GM18951 (cell line): ENCODE measurements at regions of chr7 and their contacts with region 1.

Region 1: GRCh38 chr7:22103255-22103969 is 157.7 kb upstream of the CDCA7L start:
- POLR2A ChIP-seq: no peak

Region 2: DNA sequence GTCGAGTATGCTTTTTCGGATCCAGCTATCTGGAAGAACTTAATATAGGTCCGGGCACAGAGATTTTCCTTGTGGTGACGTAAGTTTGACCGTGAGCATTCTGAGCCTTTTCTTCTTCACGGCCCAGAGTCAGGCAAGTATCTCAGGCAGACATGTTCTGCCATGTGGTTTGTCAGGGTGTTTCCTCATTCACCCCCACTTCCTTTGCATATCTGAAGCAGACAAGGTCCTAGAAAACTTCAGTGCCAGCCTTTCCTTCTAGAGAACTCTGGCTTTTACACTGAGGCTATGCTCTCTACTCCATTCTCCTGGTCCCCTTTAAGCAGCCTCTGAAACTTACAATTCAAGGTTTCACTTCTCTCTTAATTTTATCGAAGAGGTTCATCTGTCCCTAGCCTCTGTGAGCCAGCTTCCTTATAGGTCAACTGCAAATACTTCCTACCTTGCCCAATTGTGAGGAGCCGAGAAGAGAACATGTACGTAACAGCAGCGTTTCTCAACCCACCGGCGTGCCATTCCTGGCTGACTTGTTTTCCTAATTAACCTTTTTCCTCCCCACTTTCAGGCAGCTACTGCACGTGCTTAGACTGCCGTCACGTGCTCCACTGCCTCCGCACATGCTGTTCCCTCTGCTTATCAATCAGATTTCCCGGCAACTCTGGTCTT is 205.0 kb before region 1 on chr7:
- in situ Hi-C with region 1: no loop called
- POLR2A ChIP-seq: no peak

Region 3: GRCh38 chr7:21966271-21966670 is 137.1 kb before region 1 on chr7:
- in situ Hi-C with region 1: no loop called
- POLR2A ChIP-seq: no peak

Region 4: DNA sequence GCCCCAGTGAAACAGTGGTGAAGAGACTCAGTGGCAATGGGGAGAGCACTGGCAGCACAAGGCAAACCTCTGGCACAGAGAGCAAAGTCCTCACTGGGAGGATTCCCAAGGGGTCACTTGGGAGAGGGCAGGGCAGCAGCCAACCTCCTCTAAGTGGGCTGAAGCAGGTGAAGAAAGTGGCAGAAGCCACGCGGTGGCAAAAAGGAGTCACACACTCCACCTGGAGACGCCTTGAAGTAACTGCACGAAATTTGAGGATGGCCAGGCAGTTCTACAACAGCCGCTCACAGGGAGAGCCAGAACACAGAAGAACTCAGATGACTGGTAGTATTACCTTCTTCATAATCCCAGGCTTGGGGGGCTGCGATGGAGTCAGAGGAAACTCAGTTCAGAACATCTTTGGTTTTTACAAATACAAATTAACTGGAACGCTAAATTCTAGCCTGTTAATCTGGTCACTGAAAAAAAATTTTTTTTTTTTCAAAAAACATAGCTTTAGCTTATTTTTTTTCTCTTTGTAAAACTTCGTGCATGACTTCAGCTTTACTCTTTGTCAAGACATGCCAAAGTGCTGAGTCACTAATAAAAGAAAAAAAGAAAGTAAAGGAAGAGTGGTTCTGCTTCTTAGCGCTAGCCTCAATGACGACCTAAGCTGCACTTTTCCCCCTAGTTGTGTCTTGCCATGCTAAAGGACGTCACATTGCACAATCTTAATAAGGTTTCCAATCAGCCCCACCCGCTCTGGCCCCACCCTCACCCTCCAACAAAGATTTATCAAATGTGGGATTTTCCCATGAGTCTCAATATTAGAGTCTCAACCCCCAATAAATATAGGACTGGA is 623.2 kb after region 1 on chr7:
- in situ Hi-C with region 1: loop called (anchors 25 kb)
- POLR2A ChIP-seq: no peak